Endothelial cell of umbilical vein (primary cell): ENCODE measurements at regions of chr6 and their contacts with region 1.

Region 1: GRCh38 chr6:28542440-28543296 is 17.0 kb downstream of the GPX5 start:
- DNase-seq: peak; percentile 70
- H3K4me3 ChIP-seq: no peak overlapping the region
- H3K27ac ChIP-seq: no peak overlapping the region
- H3K4me1 ChIP-seq: peaks cover 13% of the 10 kb centered on the region
- H3K27me3 ChIP-seq: peaks cover 0 to under 1% of the 10 kb centered on the region in 2 experiments
- CTCF ChIP-seq: peak in 1 of 2 donors; percentile 33
- POLR2A ChIP-seq: no peak

Region 2: DNA sequence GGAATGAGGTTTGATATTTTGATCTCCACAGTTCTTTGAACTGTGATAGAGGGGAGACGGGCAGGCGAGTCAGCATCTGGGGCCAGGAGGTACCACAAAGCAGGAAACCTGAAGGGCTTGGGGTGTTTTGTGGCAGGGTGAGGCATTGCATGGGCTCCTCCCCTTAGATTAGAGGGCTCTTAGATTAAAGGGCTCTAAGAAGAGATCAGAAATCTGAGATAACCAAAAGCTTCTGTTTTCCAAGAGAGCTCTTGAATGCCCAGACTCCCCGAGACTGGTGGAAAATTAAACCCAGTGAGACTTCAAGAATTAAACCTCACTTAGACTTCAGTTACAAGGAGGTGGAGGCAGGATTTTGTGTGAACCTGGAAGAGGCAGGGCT is 19.4 kb before region 1 on chr6:
- CTCF ChIA-PET with region 1: no interaction called
- POLR2A ChIA-PET with region 1: no interaction called
- dilution Hi-C with region 1: no loop called
- intact Hi-C with region 1: no loop called
- DNase-seq: no peak
- H3K4me3 ChIP-seq: no peak overlapping the region
- H3K27ac ChIP-seq: no peak overlapping the region
- H3K4me1 ChIP-seq: no peaks in the 10 kb centered on the region
- H3K27me3 ChIP-seq: no peaks in the 10 kb centered on the region
- CTCF ChIP-seq: no peak
- POLR2A ChIP-seq: no peak

Region 3: DNA sequence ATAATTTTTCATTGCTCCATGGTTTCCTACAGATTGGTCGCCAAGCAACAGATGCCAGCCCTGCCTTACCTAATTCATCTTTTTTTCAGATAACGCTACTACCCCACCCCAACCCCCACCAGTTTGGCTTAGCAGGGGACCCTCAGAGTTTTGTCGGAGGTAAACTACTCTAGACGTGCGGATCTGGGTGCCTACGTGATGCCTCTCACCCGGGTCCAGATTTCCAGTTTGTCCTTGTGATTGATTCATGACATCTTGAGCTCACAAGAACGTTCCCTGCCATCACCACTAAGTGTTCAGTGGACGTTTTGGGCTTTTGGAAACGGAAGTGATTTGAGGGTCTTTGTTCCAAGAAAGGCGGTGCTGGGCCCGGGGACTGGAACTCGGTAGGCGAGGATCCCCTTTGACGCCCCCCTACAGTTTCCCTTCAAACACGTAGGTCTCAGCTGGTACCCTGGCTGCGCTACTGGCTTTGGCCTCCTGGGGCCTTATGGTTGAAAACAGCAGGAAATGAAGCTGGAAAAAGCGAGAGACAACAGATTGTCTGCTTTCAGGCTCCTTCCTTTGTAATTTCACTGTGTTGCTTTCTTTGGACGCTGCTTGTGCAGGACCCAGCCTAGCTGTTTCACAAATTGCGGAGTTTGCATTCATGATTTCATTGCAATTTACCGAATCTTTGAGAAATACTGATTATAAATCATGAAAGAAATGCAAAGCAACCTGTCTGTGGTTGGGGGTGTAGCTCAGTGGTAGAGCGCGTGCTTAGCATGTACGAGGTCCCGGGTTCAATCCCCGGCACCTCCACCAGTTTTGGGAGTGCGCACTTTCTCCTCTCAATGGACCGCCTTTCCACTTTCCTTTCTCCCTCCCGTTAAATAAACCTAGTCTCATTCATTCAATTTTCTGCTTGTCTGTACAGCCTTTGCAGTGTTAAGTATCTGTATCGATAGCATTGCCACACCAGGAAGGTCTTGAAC is 64.0 kb after region 1 on chr6:
- CTCF ChIA-PET with region 1: interaction called, 3 read pairs
- POLR2A ChIA-PET with region 1: no interaction called
- dilution Hi-C with region 1: no loop called
- intact Hi-C with region 1: loop called (anchors 5 kb)
- DNase-seq: peak; percentile 53
- H3K4me3 ChIP-seq: peak overlapping the region in 2 of 3 experiments; percentile 7 to 61
- H3K27ac ChIP-seq: no peak overlapping the region
- H3K4me1 ChIP-seq: no peaks in the 10 kb centered on the region
- H3K27me3 ChIP-seq: no peaks in the 10 kb centered on the region
- CTCF ChIP-seq: peak; percentile 36 to 37
- POLR2A ChIP-seq: no peak